ENCODE measurements at regions of chr20 and their contacts with region 1.

Region 1: DNA sequence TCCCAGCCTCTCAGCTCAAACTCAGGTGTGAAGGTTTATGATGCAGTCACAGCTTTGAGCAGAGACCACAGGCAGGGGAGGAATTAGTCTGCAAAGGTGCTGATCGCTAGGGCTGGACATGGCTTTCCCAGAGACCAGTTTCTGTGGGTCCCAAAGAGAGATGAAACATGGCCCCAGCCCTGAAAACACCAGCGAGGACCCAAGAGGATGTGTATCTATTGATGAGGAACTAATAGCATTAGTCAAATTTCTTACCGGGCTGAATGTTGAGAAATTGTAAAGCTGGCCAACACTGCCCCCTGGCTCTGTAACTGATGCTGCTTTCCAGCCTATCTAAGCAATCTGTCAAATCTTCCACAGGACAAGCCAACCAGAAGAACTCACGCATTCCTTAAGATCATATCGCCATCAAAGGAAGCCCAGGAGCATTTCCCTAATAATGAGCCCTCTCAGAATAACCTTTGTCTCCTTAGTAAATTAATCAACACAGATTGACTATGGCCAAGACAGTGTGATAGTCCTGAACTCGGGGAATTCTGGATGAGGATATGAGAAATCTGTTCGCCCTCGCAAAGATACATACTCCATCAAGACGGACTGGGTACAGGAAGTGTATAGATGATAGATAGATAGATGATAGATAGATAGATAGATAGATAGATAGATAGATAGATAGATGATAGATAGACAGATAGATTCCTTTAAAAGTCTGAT is 7.8 kb upstream of the ACSS1 start:
- DNase-seq: peak; percentile 45 to 83 (median 69)
- ATAC-seq: peak; percentile 83
- H3K4me3 ChIP-seq: no peak overlapping the region
- H3K4me3 Mint-ChIP-seq: no peak overlapping the region
- H3K27ac ChIP-seq: no peak overlapping the region
- H3K27ac Mint-ChIP-seq: no peak overlapping the region
- H3K4me1 ChIP-seq: peaks cover 3% of the 10 kb centered on the region
- H3K4me1 Mint-ChIP-seq: peaks cover 8% of the 10 kb centered on the region
- H3K27me3 ChIP-seq: peaks cover 0 to 13% of the 10 kb centered on the region in 2 experiments
- H3K27me3 Mint-ChIP-seq: peaks cover 18% of the 10 kb centered on the region
- CTCF ChIP-seq: peak; percentile 75

Region 2: DNA sequence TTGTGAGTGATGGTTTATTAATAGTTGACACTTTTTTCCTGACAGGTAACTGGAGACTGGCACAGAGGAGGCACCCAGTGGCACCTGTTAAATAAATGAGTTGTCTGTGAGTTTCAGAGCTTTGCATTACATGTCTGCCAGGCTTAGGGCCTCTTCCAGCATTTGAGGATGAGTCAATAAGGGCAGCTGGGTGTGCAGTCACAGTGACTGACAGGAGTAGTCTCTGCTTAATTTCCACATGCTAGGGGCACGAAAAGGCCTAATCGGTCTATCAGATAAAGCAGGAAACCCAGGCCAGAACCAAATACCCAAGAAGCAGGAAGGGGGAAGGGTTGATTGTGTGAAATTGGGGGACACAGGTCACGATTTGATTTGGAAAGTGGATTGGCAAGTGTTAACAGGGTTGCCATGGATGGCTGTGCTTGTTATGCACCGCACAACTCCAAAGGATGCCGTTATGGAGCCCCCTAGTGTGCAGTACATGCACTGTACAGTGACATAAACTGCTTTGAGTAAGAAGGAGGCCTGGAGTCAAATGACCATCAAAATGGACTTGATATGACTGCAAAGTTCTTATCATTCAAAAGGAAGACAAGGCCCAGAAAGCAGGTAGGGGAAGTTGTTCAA is 965.3 kb before region 1 on chr20:
- CTCF ChIA-PET with region 1: no interaction called
- POLR2A ChIA-PET with region 1: no interaction called
- intact Hi-C with region 1: loop called in 1 of 2 experiments (anchors 5 kb)
- DNase-seq: peak; percentile 16 to 78 (median 59)
- ATAC-seq: peak; percentile 93
- H3K4me3 ChIP-seq: no peak overlapping the region
- H3K4me3 Mint-ChIP-seq: no peak overlapping the region
- H3K27ac ChIP-seq: no peak overlapping the region
- H3K27ac Mint-ChIP-seq: no peak overlapping the region
- H3K4me1 ChIP-seq: peaks cover 4% of the 10 kb centered on the region
- H3K4me1 Mint-ChIP-seq: peaks cover 4% of the 10 kb centered on the region
- H3K27me3 ChIP-seq: no peaks in the 10 kb centered on the region
- H3K27me3 Mint-ChIP-seq: peaks cover 2% of the 10 kb centered on the region
- CTCF ChIP-seq: peak; percentile 75

Region 3: GRCh38 chr20:24160563-24161375 is 905.0 kb before region 1 on chr20:
- CTCF ChIA-PET with region 1: no interaction called
- POLR2A ChIA-PET with region 1: no interaction called
- intact Hi-C with region 1: loop called in 1 of 2 experiments (anchors 5 kb)
- DNase-seq: peak in 2 of 9 experiments; percentile 20 to 46
- ATAC-seq: no peak
- H3K4me3 ChIP-seq: no peak overlapping the region
- H3K4me3 Mint-ChIP-seq: no peak overlapping the region
- H3K27ac ChIP-seq: no peak overlapping the region
- H3K27ac Mint-ChIP-seq: no peak overlapping the region
- H3K4me1 ChIP-seq: no peaks in the 10 kb centered on the region
- H3K4me1 Mint-ChIP-seq: peaks cover 2% of the 10 kb centered on the region
- H3K27me3 ChIP-seq: no peaks in the 10 kb centered on the region
- H3K27me3 Mint-ChIP-seq: peaks cover 2% of the 10 kb centered on the region
- CTCF ChIP-seq: peak; percentile 24

Region 4: DNA sequence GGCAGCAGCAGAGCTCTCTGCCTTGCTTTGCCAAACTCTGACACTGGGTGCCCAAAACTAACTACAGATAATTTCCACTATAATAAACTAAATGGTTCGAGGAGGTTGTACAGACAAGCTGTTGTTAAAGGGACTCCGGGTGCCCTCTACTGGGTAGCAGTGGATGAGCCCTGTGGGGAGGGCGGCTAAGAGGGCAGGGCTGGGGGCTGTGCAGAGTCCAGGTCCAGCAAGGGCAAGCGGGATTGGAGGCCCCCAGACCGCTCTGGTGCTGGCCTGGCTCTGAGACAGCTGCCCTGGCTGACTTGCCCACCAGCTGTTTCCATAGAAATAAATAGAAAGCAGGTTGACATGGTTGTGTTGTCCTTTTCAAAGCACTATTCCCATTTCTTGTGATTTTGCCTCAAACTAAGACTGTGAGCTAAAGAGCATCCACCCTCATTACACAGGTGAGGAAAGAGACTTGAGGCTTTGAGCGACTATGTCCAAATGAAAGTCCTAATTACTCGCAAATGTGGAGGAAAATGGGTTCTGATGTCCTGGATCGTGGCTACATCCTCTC is 284.3 kb before region 1 on chr20:
- CTCF ChIA-PET with region 1: interaction called, 6 read pairs
- POLR2A ChIA-PET with region 1: no interaction called
- intact Hi-C with region 1: loop called in 1 of 2 experiments (anchors 10 kb)
- DNase-seq: no peak
- ATAC-seq: no peak
- H3K4me3 ChIP-seq: no peak overlapping the region
- H3K4me3 Mint-ChIP-seq: no peak overlapping the region
- H3K27ac ChIP-seq: no peak overlapping the region
- H3K27ac Mint-ChIP-seq: no peak overlapping the region
- H3K4me1 ChIP-seq: no peaks in the 10 kb centered on the region
- H3K4me1 Mint-ChIP-seq: peaks cover 2% of the 10 kb centered on the region
- H3K27me3 ChIP-seq: peaks cover 0 to 4% of the 10 kb centered on the region in 2 experiments
- H3K27me3 Mint-ChIP-seq: peaks cover 5% of the 10 kb centered on the region
- CTCF ChIP-seq: no peak

Region 5: DNA sequence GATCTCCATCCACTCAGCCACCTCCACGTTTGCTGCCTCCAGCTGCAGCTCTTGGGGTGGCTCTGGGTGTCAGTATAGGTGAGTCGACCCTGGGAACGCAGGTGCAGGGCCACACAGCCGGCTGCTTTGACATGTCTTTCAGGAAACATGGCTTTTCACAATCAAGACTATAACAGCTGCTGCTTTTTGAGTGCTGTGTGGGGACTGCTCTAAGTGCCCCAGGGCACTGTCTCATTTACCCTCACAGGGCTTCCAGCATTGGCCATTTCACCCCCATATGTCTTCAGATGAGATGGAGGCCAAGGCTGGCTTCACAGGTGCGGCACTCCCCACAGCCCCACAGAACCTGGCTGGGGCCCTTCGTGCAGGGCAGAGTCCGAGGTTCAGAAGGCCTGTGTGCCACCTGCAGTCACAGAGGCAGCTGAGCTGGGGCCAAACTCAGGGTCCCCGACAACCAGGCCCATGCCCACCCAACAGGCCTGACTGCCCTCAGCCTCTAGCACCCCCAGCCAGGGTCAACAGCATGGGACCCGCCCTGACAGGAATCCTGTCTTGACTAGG is 131.6 kb before region 1 on chr20:
- CTCF ChIA-PET with region 1: interaction called, 27 read pairs
- POLR2A ChIA-PET with region 1: no interaction called
- intact Hi-C with region 1: loop called (anchors 2 to 5 kb)
- DNase-seq: peak in 1 of 9 experiments; percentile 45
- ATAC-seq: no peak
- H3K4me3 ChIP-seq: no peak overlapping the region
- H3K4me3 Mint-ChIP-seq: no peak overlapping the region
- H3K27ac ChIP-seq: no peak overlapping the region
- H3K27ac Mint-ChIP-seq: no peak overlapping the region
- H3K4me1 ChIP-seq: peaks cover 17% of the 10 kb centered on the region
- H3K4me1 Mint-ChIP-seq: peaks cover 31% of the 10 kb centered on the region
- H3K27me3 ChIP-seq: no peaks in the 10 kb centered on the region
- H3K27me3 Mint-ChIP-seq: no peaks in the 10 kb centered on the region
- CTCF ChIP-seq: no peak

Region 6: DNA sequence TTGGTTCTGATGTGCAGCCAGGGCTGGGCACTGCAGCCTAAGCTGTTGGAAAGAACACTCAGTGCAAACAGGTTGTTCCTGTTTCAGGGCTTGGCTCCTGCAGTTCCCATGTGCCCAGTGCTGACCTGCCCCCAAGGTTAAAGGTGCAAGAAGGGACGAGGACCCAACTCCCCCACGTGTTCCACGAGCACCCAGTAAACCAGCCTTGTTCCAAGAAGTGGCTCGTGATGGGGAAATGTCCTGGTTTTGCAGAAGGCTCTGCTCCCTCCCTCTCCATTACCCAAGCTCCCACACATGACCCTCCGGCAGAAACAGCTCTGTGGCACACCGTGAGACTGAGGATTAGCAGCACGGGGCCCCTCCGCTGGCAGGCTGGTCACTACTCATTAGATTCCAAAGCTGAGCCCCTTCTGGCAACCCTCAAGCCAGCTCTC is 17.2 kb before region 1 on chr20:
- CTCF ChIA-PET with region 1: interaction called, 11 read pairs
- POLR2A ChIA-PET with region 1: no interaction called
- intact Hi-C with region 1: no loop called
- DNase-seq: no peak
- ATAC-seq: no peak
- H3K4me3 ChIP-seq: no peak overlapping the region
- H3K4me3 Mint-ChIP-seq: no peak overlapping the region
- H3K27ac ChIP-seq: no peak overlapping the region
- H3K27ac Mint-ChIP-seq: no peak overlapping the region
- H3K4me1 ChIP-seq: peaks cover 10% of the 10 kb centered on the region
- H3K4me1 Mint-ChIP-seq: peaks cover 39% of the 10 kb centered on the region
- H3K27me3 ChIP-seq: no peaks in the 10 kb centered on the region
- H3K27me3 Mint-ChIP-seq: no peaks in the 10 kb centered on the region
- CTCF ChIP-seq: no peak

Region 7: GRCh38 chr20:25097498-25097897 is 31.7 kb after region 1 on chr20:
- CTCF ChIA-PET with region 1: no interaction called
- POLR2A ChIA-PET with region 1: no interaction called
- intact Hi-C with region 1: no loop called
- DNase-seq: no peak
- ATAC-seq: no peak
- H3K4me3 ChIP-seq: no peak overlapping the region
- H3K4me3 Mint-ChIP-seq: no peak overlapping the region
- H3K27ac ChIP-seq: no peak overlapping the region
- H3K27ac Mint-ChIP-seq: no peak overlapping the region
- H3K4me1 ChIP-seq: peaks cover 1% of the 10 kb centered on the region
- H3K4me1 Mint-ChIP-seq: peaks cover 12% of the 10 kb centered on the region
- H3K27me3 ChIP-seq: no peaks in the 10 kb centered on the region
- H3K27me3 Mint-ChIP-seq: no peaks in the 10 kb centered on the region
- CTCF ChIP-seq: no peak

Region 8: GRCh38 chr20:25178563-25179438 is 113.0 kb after region 1 on chr20:
- CTCF ChIA-PET with region 1: interaction called, 6 read pairs
- POLR2A ChIA-PET with region 1: no interaction called
- intact Hi-C with region 1: loop called (anchors 1 to 5 kb)
- DNase-seq: peak in 3 of 9 experiments; percentile 8 to 67 (median 56)
- ATAC-seq: peak; percentile 71
- H3K4me3 ChIP-seq: no peak overlapping the region
- H3K4me3 Mint-ChIP-seq: no peak overlapping the region
- H3K27ac ChIP-seq: no peak overlapping the region
- H3K27ac Mint-ChIP-seq: no peak overlapping the region
- H3K4me1 ChIP-seq: no peaks in the 10 kb centered on the region
- H3K4me1 Mint-ChIP-seq: no peaks in the 10 kb centered on the region
- H3K27me3 ChIP-seq: no peaks in the 10 kb centered on the region
- H3K27me3 Mint-ChIP-seq: peaks cover 4% of the 10 kb centered on the region
- CTCF ChIP-seq: peak; percentile 77